G401 (cell line): ENCODE measurements at regions of chr5 and their contacts with region 1.

Region 1: GRCh38 chr5:78881884-78882283 is 103.2 kb downstream of the ARSB start:
- DNase-seq: no peak

Region 2: GRCh38 chr5:78841767-78842166 is 40.1 kb before region 1 on chr5:
- in situ Hi-C with region 1: loop called (anchors 5 kb)
- DNase-seq: no peak

Region 3: DNA sequence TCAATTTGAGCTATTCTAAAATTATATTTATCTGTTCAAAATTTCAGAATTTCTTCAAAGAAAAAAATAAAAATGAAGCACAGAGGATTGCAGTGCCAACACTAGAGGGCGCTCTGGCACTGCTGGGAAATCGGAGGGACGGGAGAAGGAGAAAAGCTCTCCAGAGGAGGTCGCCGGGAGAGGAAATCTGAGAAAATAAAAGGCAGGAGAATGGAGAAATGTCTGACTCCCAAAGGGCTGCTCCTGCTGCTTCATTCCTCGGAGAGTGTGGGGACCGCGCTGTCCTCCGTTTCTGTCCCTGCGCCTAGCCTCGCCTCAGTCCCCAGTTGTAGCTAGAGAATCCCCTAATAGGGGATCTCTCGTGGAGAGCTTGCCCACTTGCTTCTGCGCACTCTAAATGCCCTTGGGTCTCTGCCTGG is 143.2 kb after region 1 on chr5:
- in situ Hi-C with region 1: no loop called
- DNase-seq: peak; percentile 66